ENCODE measurements at regions of chr4 and their contacts with region 1.

Region 1: GRCh38 chr4:85474818-85475630 is at the start of gene ARHGAP24:
- DNase-seq: peak; percentile 92
- total RNA-seq, gene ARHGAP24: 60.1 TPM

Region 2: GRCh38 chr4:85399270-85399669 is 75.8 kb before region 1 on chr4:
- intact Hi-C with region 1: loop called (anchors 5 kb)
- DNase-seq: no peak

Region 3: GRCh38 chr4:85430697-85431096 is 44.3 kb before region 1 on chr4:
- intact Hi-C with region 1: loop called (anchors 5 kb)
- DNase-seq: no peak

Region 4: DNA sequence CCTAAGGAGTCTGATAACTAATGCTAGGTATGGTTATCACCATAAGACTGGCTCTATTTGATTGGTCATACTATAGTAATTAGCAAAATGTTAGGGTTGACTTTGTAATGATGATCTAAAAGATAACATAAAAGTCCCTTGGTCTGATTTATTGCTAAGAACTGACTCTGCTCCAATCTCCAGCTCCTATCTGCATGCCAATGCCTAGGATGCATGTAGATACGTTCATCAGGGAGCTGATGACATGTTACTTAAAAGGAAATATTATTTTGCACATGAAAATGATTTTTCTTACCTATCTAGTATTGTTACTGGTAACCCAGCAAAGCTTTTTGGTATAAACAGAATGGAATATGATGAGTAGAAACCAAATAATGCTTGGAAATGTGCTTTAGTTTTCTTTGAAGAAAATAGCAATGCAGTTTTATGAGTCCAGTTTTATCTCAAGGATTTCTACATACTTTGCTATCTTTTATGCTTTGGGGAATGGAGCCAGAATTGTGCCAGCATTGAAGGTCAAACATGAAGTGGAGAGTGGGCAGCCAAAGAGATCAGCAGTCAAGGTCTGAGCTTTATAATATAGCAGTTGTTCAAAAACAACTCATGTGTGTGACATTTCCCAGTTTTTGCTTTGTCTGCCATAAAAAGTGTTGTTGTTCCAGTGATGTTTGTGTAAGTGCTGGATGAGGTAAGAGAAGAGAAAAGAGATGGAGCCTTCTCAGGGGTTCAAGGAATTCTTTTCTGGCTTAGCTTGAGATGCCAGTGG is 121.0 kb after region 1 on chr4:
- intact Hi-C with region 1: loop called (anchors 5 kb)
- DNase-seq: no peak

Region 5: DNA sequence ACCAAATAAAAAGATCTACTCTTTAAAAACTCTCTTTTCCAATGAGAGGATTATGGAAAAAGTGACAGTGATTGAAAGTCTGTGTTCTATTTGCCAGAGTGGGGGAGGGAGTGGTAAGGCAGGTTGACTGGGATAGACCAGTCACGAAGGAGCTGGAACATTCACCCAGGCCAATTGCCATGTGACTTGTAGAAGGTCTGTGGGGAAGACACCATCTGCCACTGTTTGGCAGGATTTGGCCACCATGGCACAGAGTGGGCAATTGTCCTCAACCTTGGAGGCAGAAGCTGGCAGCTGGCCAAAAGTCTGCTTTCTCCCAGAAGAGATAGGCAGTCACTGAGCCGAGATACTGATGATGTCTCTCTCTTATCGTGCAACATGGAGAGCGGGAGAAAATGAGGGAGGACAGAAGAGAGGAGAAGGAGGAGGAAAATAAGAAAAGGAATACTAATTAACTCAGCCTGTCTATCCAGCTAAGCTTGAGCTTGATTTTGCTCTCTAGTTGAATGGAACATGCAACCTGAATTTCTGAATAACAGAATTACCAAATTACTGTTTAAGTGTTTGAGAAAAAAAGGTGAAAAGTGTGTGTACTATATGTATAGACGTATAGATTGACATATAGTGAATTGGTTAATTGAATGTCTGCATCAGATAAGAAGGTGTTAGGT is 267.0 kb after region 1 on chr4:
- intact Hi-C with region 1: loop called (anchors 5 kb)
- DNase-seq: peak; percentile 77

Measured in cardiac septum (tissue), 1 donor.